Head of caudate nucleus (tissue), 42 donors: ENCODE measurements at regions of chr3 and their contacts with region 1.

Region 1: DNA sequence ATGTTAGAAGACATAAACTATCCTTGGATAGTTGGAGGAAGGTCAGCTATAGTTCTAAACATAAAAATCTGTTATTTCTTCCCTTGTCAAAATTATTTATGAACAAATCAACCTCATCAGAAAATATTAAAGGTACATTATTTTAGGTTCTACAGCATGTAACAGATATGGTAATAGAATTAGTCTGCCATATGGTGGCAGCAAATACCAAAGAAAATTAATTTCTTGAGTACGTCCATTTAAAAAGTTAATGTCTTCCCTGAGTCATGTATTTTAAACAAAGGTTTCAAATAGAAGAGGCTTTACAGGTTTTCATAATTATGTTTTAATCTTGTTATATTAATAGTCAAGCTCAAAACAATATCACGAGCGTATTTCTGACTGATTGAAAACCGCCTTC is 17.9 kb upstream of the ANKRD28 start:
- DNase-seq: no peak

Region 2: GRCh38 chr3:15629860-15630597 is 185.7 kb before region 1 on chr3:
- intact Hi-C with region 1: loop called (anchors 5 kb)
- DNase-seq: peak in 40 of 42 donors; percentile 48 to 91 (median 80)

Region 3: DNA sequence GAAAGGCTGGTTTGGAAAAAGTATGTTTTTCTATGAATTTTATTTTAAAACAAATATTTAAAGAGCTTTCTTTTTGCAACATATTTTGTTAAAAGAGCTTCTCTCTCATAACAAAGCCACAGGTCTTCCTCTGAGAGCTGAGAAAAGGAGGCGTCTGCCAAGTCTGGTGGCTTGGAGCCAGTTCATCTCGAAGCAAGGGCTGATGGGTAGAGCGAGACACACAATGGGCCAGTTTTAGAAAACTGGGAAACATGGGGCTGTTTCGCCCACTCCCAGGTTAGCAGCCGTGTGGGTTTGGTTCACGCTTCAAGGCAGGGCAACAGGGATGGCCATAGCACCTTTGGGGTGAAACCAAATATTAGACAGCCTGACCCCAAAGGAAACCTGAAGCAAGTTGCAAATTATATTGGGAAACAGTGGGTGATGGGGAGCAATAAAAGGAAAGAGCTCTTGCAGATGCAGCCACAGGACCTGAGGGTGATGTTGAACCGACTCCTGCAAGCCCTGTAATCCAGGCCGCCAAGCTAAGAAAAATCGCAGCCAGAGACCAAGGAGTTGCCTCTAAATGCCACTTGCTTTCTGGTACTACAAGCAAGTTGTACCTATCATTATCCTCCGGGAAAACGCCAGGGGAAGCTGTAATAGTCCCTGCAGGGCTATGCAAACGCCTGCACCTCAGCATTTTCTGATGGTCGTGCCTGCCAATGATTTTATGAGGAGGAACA is 270.4 kb after region 1 on chr3:
- intact Hi-C with region 1: loop called (anchors 10 kb)
- DNase-seq: peak; percentile 43 to 94 (median 85)